Ascending aorta (tissue), 2 donors: ENCODE measurements at regions of chr6 and their contacts with region 1.

Region 1: GRCh38 chr6:129598244-129599187 is 111.5 kb downstream of the ARHGAP18 start:
- DNase-seq: no peak
- H3K4me3 ChIP-seq: no peak overlapping the region
- H3K27ac ChIP-seq: no peak overlapping the region
- H3K4me1 ChIP-seq: no peaks in the 10 kb centered on the region
- H3K27me3 ChIP-seq: no peaks in the 10 kb centered on the region
- CTCF ChIP-seq: peak; percentile 66 to 80 (median 71)

Region 2: GRCh38 chr6:129490521-129491245 is 107.8 kb before region 1 on chr6:
- intact Hi-C with region 1: no loop called
- DNase-seq: peak in 1 of 2 donors; percentile 80
- H3K4me3 ChIP-seq: peak overlapping the region; percentile 41 to 48
- H3K27ac ChIP-seq: peak overlapping the region; percentile 93 to 95
- H3K4me1 ChIP-seq: peaks cover 4 to 17% of the 10 kb centered on the region in 2 donors
- H3K27me3 ChIP-seq: no peaks in the 10 kb centered on the region
- CTCF ChIP-seq: no peak

Region 3: GRCh38 chr6:129730477-129731165 is 132.1 kb after region 1 on chr6:
- intact Hi-C with region 1: loop called (anchors 1 kb)
- DNase-seq: no peak
- H3K4me3 ChIP-seq: no peak overlapping the region
- H3K27ac ChIP-seq: no peak overlapping the region
- H3K4me1 ChIP-seq: no peaks in the 10 kb centered on the region
- H3K27me3 ChIP-seq: no peaks in the 10 kb centered on the region
- CTCF ChIP-seq: peak; percentile 30 to 56 (median 54)

Region 4: DNA sequence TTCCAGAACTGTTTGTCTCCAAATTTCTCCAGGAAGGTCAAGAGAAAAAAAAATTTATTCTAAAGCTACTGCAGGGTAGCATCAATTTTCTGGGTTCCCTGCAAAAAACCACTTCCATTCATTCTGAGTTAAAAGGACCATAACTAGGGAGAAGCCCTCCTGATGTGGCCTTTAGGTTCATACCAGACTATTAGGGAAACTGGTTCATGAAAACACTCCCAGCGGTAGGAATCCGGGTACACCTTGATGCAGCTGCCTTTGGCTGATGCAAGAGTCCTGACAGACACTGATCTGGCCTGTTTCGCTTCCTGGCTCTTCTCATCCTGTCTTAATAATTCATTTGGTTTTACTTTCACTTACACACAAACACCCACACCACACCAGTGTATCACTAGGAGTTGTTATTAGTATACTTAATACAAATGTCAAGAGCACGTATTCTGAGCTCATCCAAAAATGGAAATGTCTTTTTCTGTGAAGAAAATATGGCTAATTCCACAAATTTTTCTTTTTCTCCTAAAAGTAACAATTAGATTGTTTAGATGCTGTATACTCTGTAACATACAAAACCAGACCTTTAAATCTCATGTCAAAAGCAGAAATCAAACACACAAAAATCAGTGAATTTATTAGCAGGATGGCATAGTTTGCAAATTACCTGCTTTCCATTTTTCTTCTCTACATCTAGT is 149.8 kb after region 1 on chr6:
- intact Hi-C with region 1: loop called (anchors 2 kb)
- DNase-seq: no peak
- H3K4me3 ChIP-seq: no peak overlapping the region
- H3K27ac ChIP-seq: no peak overlapping the region
- H3K4me1 ChIP-seq: peaks cover 0 to 15% of the 10 kb centered on the region in 2 donors
- H3K27me3 ChIP-seq: no peaks in the 10 kb centered on the region
- CTCF ChIP-seq: no peak

Region 5: GRCh38 chr6:130020907-130021629 is 422.6 kb after region 1 on chr6:
- intact Hi-C with region 1: loop called (anchors 2 kb)
- DNase-seq: peak; percentile 45 to 92
- H3K4me3 ChIP-seq: peak overlapping the region; percentile 79 to 93
- H3K27ac ChIP-seq: peak overlapping the region; percentile 70 to 82
- H3K4me1 ChIP-seq: no peaks in the 10 kb centered on the region
- H3K27me3 ChIP-seq: no peaks in the 10 kb centered on the region
- CTCF ChIP-seq: peak; percentile 77 to 83 (median 79)